ENCODE measurements at regions of chr6 and their contacts with region 1.

Region 1: GRCh38 chr6:42782622-42783176 is 847 bp downstream of the BICRAL start:
- DNase-seq: peak; percentile 78
- H3K4me3 ChIP-seq: peak overlapping the region; percentile 69 to 96 (median 93)
- H3K27ac ChIP-seq: peak overlapping the region; percentile 95
- H3K4me1 ChIP-seq: peaks cover 6% of the 10 kb centered on the region
- H3K27me3 ChIP-seq: no peaks in the 10 kb centered on the region
- CTCF ChIP-seq: no peak

Region 2: GRCh38 chr6:42572523-42572922 is 210.2 kb before region 1 on chr6:
- CTCF ChIA-PET with region 1: no interaction called
- dilution Hi-C with region 1: no loop called
- in situ Hi-C with region 1: no loop called
- intact Hi-C with region 1: no loop called
- DNase-seq: no peak
- H3K4me3 ChIP-seq: no peak overlapping the region
- H3K27ac ChIP-seq: no peak overlapping the region
- H3K4me1 ChIP-seq: peaks cover 11% of the 10 kb centered on the region
- H3K27me3 ChIP-seq: no peaks in the 10 kb centered on the region
- CTCF ChIP-seq: no peak

Region 3: GRCh38 chr6:42796171-42796570 is 13.5 kb after region 1 on chr6:
- CTCF ChIA-PET with region 1: no interaction called
- dilution Hi-C with region 1: no loop called
- in situ Hi-C with region 1: no loop called
- intact Hi-C with region 1: loop called (anchors 2 kb)
- DNase-seq: no peak
- H3K4me3 ChIP-seq: no peak overlapping the region
- H3K27ac ChIP-seq: no peak overlapping the region
- H3K4me1 ChIP-seq: peaks cover 27% of the 10 kb centered on the region
- H3K27me3 ChIP-seq: no peaks in the 10 kb centered on the region
- CTCF ChIP-seq: no peak

Region 4: DNA sequence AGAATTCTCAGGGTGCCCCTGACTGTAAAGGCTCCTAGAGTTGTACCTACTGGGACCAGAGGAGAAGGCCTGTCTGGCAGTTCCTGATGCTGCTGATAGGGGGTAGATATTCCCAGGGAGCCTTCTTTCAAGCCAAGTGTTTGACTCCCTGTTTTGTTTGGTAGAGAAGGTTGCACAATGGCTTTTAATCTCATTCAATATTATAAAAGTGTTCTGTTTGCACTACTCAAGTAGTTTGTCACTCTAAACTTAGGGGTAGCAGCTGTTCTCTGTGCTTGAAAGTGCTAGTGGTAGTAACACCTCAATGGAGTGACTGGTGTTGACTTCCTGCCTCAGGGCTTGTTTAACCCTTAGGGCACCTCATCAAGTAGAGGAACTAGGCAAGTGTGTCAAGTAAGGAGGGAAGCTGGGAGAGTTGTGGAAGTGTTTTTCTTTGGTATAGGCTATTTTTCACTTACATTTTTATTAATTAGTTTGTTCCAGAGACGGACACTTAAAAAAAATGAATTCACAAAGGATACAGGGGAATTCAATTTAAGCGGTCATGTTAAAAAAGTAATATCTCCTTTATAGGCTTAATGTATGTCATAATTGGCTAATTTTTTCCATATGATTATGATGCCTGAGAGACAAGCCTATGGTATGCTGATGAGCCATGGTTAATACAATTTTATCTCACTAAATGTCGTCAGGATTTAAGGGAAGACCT is 37.3 kb after region 1 on chr6:
- CTCF ChIA-PET with region 1: no interaction called
- dilution Hi-C with region 1: loop called (anchors 5 kb)
- in situ Hi-C with region 1: no loop called
- intact Hi-C with region 1: no loop called
- DNase-seq: no peak
- H3K4me3 ChIP-seq: no peak overlapping the region
- H3K27ac ChIP-seq: no peak overlapping the region
- H3K4me1 ChIP-seq: no peaks in the 10 kb centered on the region
- H3K27me3 ChIP-seq: no peaks in the 10 kb centered on the region
- CTCF ChIP-seq: peak in 1 of 2 donors; percentile 21

Region 5: DNA sequence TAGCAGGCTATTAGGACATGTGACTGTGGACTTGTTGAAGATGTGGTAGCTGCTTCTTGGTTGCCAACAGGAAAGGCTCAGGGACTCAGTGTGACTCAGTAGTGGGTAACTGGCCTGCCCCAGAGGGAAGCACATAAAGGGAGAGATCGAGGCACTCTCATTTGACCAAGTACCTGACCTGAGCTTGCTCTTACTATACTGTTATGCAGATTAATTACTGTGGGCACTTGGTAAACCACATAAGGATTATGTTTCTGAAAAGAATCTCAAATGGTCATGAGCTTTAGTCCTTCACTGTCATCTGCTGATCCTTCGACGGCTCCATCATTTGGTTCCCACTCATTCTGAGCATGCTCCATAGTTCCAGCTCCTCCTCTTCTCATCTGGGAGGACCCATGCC is 48.5 kb after region 1 on chr6:
- CTCF ChIA-PET with region 1: no interaction called
- dilution Hi-C with region 1: no loop called
- in situ Hi-C with region 1: no loop called
- intact Hi-C with region 1: no loop called
- DNase-seq: no peak
- H3K4me3 ChIP-seq: no peak overlapping the region
- H3K27ac ChIP-seq: no peak overlapping the region
- H3K4me1 ChIP-seq: no peaks in the 10 kb centered on the region
- H3K27me3 ChIP-seq: no peaks in the 10 kb centered on the region
- CTCF ChIP-seq: no peak

Region 6: GRCh38 chr6:43308101-43308989 is 525.6 kb after region 1 on chr6 and contains the start of gene CRIP3:
- CTCF ChIA-PET with region 1: no interaction called
- dilution Hi-C with region 1: no loop called
- in situ Hi-C with region 1: no loop called
- intact Hi-C with region 1: no loop called
- DNase-seq: peak; percentile 40
- H3K4me3 ChIP-seq: peak within 1 kb of the TSS; percentile 5 to 44 (median 32)
- H3K27ac ChIP-seq: no peak within 1 kb of the TSS
- H3K4me1 ChIP-seq: peaks cover 12% of the 10 kb centered on the region
- H3K27me3 ChIP-seq: no peaks in the 10 kb centered on the region
- CTCF ChIP-seq: peak; percentile 51 to 68
- total RNA-seq, gene CRIP3: 0.50 TPM in 1 of 2 donors, not detected in the other

Measured in mammary epithelial cell (primary cell).